PC-9 (cell line): ENCODE measurements at regions of chr4 and their contacts with region 1.

Region 1: GRCh38 chr4:38675146-38676121 is 11.4 kb downstream of the KLF3 start:
- DNase-seq: peak; percentile 71 to 73
- H3K4me3 ChIP-seq: peak overlapping the region; percentile 34; the same call in 1 of the 2 replicates
- H3K27ac ChIP-seq: peak overlapping the region; percentile 74
- H3K4me1 ChIP-seq: peaks cover 57% of the 10 kb centered on the region
- H3K27me3 ChIP-seq: no peaks in the 10 kb centered on the region
- CTCF ChIP-seq: peak; percentile 96

Region 2: GRCh38 chr4:38062088-38062893 is 613.1 kb before region 1 on chr4:
- CTCF ChIA-PET with region 1: no interaction called
- POLR2A ChIA-PET with region 1: no interaction called
- intact Hi-C with region 1: loop called (anchors 2 kb)
- DNase-seq: peak; percentile 58 to 70
- H3K4me3 ChIP-seq: no peak overlapping the region
- H3K27ac ChIP-seq: no peak overlapping the region
- H3K4me1 ChIP-seq: peaks cover 19% of the 10 kb centered on the region
- H3K27me3 ChIP-seq: no peaks in the 10 kb centered on the region
- CTCF ChIP-seq: peak; percentile 90

Region 3: DNA sequence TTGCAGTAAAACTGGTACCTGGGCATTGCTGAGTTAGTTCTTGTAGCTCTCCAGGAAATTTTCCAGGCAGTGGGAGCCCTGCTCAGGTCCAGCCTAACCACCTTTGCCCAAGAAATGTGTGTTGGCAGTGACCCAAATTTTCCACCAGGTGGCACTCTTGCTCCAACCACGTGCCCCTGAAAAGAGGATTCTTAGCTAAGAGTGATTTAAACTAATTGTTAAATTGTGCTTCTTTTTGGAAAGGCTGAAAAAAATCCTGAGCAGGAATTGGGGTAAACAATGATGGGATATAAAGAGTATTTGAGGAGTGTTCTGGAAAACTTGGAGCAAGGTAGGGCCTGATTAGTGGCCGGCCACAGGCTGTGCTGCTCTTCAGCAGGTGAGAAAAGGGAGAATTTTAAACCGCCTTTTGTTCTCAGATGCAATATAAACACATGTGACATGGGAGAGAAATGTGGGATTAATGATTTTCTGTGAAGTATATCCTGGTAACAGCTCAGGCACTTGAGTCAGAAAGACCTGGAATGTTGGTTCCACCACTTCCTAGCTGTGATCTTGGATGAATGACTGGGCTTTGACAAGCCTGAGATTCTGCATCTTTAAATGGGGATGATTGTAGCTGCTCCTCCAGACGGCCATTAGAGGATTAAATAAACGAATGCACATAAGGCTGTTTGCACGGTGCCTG is 495.6 kb before region 1 on chr4:
- CTCF ChIA-PET with region 1: interaction called, 9 read pairs
- POLR2A ChIA-PET with region 1: no interaction called
- intact Hi-C with region 1: loop called (anchors 1 kb)
- DNase-seq: peak; percentile 82
- H3K4me3 ChIP-seq: no peak overlapping the region
- H3K27ac ChIP-seq: peak overlapping the region; percentile 86
- H3K4me1 ChIP-seq: peaks cover 30% of the 10 kb centered on the region
- H3K27me3 ChIP-seq: no peaks in the 10 kb centered on the region
- CTCF ChIP-seq: peak; percentile 98

Region 4: DNA sequence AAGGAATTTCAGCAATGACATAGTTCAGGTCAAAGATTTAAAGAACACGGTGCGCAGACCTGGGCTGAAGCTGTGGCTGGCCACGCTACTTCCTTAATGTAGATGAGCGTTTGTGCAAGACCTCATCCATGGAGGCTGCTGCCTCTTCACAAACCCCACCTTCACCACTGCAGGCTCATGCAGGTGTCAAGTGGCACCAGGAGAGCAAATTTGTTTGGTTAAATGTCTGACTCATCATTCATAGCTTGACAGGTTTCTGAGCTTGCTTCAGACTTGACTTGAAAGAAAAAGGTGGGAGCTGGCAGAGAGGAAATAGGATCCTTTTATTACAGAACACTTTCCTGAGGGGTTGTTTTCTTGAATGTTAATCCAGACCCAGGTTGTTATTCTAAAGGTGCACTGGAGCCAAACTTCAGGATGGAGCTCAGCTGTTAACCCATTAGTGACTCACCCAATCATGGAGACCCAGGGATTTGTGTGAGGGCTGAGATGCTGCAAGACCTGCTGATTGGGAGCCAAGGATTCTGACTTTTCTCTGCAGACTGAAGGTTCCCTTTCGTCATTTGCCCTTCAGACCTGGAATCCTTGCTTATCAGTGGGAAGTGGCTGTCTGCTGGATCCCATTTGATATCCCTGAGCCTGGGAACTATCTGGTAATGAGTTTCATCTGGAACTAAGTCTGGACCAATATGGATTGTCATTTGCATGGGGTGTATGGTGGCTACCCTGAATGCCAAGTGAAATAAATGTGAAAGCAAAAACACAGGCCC is 399.9 kb before region 1 on chr4:
- CTCF ChIA-PET with region 1: no interaction called
- POLR2A ChIA-PET with region 1: no interaction called
- intact Hi-C with region 1: loop called (anchors 2 kb)
- DNase-seq: peak; percentile 80 to 99
- H3K4me3 ChIP-seq: no peak overlapping the region
- H3K27ac ChIP-seq: peak overlapping the region; percentile 79
- H3K4me1 ChIP-seq: peaks cover 33% of the 10 kb centered on the region
- H3K27me3 ChIP-seq: no peaks in the 10 kb centered on the region
- CTCF ChIP-seq: no peak

Region 5: DNA sequence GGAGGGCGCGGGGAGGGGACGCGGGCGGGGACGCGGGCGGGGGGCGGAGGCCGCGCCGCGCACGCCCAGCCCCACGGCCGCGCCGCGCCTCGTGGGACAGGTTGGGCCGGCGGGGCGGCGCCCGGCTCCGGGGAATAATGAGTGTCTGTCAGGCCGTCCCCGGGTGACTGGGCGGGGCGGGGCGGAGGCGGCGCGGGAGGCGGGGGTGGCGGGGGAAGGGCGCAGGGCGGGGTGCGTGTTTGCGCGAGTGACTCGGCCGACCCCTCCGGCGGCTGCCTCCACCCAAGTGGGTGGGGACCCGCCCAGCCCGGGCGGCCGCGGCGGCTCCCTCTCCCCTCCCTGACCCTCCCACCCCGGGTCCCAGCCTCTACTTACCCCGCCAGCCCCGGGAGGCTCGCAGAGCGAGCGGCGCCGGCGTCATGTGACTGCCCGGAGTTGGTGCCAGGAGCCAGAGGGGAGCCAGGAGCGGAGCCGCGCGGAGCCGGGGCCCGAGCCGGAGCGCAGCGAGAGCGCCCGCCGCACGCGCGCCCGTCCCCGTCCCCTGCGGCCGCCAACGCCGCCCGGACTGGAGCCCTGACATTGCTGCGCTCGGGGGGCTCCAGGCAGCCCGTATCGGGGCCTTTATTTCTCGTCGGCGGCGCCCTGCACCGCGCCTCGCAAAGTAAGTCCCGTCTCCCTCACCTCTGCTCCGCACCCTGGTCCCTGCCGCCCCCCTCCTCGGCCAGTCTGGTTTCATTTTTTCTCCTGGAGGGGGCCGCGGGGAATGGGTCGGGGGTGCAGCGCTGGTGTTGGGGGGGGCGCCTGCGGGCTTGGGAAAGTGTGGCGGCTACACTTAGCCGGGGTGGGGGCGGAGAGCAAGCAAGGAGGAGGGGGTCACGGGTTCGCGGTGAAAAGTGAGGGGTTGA is 11.4 kb before region 1 on chr4 and contains the start of gene KLF3:
- CTCF ChIA-PET with region 1: interaction called, 10 read pairs
- POLR2A ChIA-PET with region 1: interaction called, 11 read pairs
- intact Hi-C with region 1: no loop called
- DNase-seq: peak; percentile 59 to 92
- H3K4me3 ChIP-seq: peak within 1 kb of the TSS; percentile 72
- H3K27ac ChIP-seq: peak within 1 kb of the TSS; percentile 96
- H3K4me1 ChIP-seq: peaks cover 34% of the 10 kb centered on the region
- H3K27me3 ChIP-seq: no peaks in the 10 kb centered on the region
- CTCF ChIP-seq: no peak
- total RNA-seq, gene KLF3: 33.1 and 37.5 TPM in 2 replicates

Region 6: DNA sequence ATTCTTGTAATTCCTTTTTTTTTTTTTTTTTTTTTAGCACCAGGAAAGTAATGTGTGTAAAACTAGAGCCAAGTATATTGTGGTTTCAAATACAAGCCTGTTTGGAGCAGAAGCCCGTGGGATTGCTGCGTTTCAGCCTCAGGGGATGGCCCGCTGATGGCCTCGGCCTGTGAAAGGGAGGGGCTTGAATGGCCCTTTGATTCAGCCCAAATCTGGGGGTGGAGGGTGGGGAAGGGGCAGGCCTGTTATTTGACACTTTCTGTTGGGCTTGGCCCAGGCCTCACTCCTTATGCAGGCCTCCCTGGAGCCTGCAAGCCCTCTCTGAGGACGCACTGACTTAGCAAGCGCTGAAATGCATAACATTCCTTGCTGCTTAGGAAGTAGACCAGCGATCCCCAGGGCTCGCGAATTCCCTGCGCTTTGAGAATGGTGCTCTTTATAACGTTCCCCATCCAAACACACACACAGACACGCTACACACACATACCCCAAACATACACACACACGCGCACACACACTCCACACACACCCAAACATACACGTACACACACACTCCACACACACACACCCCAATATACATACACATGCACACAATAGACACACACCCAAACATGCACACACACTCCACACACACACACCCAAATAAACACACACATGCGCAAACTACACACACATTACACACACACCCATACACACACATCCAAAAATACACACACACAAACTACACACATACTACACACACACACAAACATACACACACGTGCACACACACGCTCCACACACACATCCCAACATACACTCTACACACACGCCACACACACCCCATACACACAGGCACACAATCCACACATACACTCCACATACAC is 77.7 kb after region 1 on chr4:
- CTCF ChIA-PET with region 1: no interaction called
- POLR2A ChIA-PET with region 1: no interaction called
- intact Hi-C with region 1: no loop called
- DNase-seq: peak; percentile 89 to 91
- H3K4me3 ChIP-seq: no peak overlapping the region
- H3K27ac ChIP-seq: peak overlapping the region; percentile 71
- H3K4me1 ChIP-seq: peaks cover 32% of the 10 kb centered on the region
- H3K27me3 ChIP-seq: no peaks in the 10 kb centered on the region
- CTCF ChIP-seq: no peak